Mucosa of descending colon (tissue), 3 donors: ENCODE measurements at regions of chr14 and their contacts with region 1.

Region 1: GRCh38 chr14:105203057-105203531 is 22.0 kb upstream of the NUDT14 start:
- DNase-seq: peak in 2 of 3 donors; percentile 84 to 88
- ATAC-seq: peak; percentile 69
- H3K4me3 ChIP-seq: no peak overlapping the region
- H3K4me1 ChIP-seq: peaks cover 18% of the 10 kb centered on the region
- CTCF ChIP-seq: peak; percentile 90

Region 2: GRCh38 chr14:105281371-105282097 is 78.4 kb after region 1 on chr14:
- intact Hi-C with region 1: loop called (anchors 5 kb)
- DNase-seq: peak in 1 of 3 donors; percentile 54
- ATAC-seq: peak; percentile 58
- H3K4me3 ChIP-seq: no peak overlapping the region
- H3K4me1 ChIP-seq: peaks cover 8% of the 10 kb centered on the region
- CTCF ChIP-seq: peak; percentile 26

Region 3: GRCh38 chr14:105351920-105352851 is 149.1 kb after region 1 on chr14:
- intact Hi-C with region 1: loop called (anchors 5 kb)
- DNase-seq: peak; percentile 79 to 90 (median 88)
- ATAC-seq: peak; percentile 97
- H3K4me3 ChIP-seq: no peak overlapping the region
- H3K4me1 ChIP-seq: no peaks in the 10 kb centered on the region
- CTCF ChIP-seq: peak; percentile 77

Region 4: GRCh38 chr14:105398044-105398725 is 195.1 kb after region 1 on chr14 and contains the start of gene TEX22:
- intact Hi-C with region 1: no loop called
- DNase-seq: peak; percentile 93 to 95 (median 94)
- ATAC-seq: peak; percentile 95
- H3K4me3 ChIP-seq: peak within 1 kb of the TSS; percentile 63
- H3K4me1 ChIP-seq: peaks cover 10% of the 10 kb centered on the region
- CTCF ChIP-seq: no peak
- total RNA-seq, gene TEX22: 0.84 to 2.0 (median 0.95) TPM